Mammary epithelial cell (primary cell): ENCODE measurements at regions of chr2 and their contacts with region 1.

Region 1: DNA sequence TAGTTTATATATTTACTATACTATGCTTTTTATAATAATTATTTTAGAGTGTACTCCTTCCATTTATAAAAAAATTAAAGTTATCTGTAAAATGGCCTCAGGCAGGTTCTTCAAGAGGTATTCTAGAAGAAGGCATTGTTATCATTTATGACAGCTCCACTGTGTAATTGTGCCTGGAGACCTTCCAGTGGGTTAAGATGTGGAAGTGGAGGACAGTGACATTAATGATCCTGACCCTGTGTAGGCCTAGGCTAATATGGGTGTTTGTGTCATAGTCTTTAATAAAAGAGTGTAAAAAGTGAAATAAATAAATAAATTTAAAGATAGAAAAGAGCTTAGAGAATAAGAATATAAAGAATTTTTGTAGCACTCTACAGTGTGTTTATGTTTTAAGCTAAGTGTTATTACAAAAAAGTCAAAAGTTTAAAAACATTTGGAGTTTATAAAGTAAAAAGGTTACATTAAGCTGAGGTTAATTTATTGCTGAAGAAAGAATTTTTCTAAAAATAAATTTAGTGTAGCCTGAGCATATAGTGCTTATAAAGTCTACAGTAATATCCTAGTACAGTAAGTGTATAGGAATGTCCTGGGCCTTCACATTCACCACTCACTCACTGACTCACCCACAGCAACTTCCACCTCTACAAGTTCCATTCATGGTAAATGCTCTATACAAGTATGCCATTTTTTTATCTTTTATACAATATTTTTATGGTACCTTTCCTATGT is 190.0 kb upstream of the SESTD1 start:
- DNase-seq: peak; percentile 85
- H3K4me3 ChIP-seq: no peak overlapping the region
- H3K27ac ChIP-seq: peak overlapping the region; percentile 82
- H3K4me1 ChIP-seq: peaks cover 15% of the 10 kb centered on the region
- H3K27me3 ChIP-seq: no peaks in the 10 kb centered on the region
- CTCF ChIP-seq: no peak

Region 2: DNA sequence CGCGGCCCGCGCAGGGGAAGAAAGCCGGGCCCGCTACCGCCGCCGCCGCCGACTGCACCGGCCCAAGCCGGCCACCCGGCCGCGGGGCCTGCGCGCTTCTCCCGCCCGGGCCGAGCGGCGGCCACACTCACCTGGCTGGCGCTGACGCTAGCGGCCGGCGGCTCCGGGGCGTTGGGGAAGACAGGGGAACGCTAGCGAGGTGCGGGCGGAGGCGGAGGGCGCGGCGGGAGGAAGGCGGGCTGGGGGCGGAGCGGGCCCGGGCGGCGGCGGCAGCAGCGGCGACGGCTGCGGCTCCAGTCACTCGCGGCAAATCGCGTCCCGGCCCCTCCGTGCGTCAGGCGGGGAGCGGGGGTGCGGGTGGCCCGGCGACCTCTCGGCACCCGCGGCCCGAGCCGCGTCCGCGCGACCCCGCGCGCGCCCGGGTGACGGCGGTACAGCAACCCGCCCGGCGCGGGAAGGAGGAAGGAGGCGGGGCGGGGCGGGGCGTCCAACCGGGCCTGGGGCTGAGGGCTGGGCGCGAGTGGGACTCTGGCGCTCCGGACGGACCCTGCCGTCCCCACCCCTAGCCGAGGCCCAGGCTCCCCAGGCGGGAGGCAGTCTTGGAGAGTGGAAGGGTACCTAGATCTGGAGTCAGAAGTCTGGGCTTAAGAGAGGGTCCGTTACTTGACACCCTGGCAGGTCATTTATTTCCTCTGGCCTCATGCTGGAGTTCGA is 190.1 kb before region 1 on chr2 and contains the start of gene SESTD1:
- CTCF ChIA-PET with region 1: no interaction called
- dilution Hi-C with region 1: no loop called
- in situ Hi-C with region 1: no loop called
- intact Hi-C with region 1: loop called (anchors 5 kb)
- DNase-seq: peak; percentile 53
- H3K4me3 ChIP-seq: peak within 1 kb of the TSS; percentile 61 to 80 (median 64)
- H3K27ac ChIP-seq: peak within 1 kb of the TSS; percentile 86
- H3K4me1 ChIP-seq: peaks cover 36% of the 10 kb centered on the region
- H3K27me3 ChIP-seq: no peaks in the 10 kb centered on the region
- CTCF ChIP-seq: no peak
- total RNA-seq, gene SESTD1: 20.7 to 32.1 TPM